ENCODE measurements at regions of chr11 and their contacts with region 1.

Region 1: GRCh38 chr11:124415356-124415923 is 9.2 kb downstream of the OR8B4 start:
- ATAC-seq: no peak
- H3K4me3 ChIP-seq: no peak overlapping the region
- H3K27ac ChIP-seq: no peak overlapping the region
- H3K4me1 ChIP-seq: no peaks in the 10 kb centered on the region

Region 2: DNA sequence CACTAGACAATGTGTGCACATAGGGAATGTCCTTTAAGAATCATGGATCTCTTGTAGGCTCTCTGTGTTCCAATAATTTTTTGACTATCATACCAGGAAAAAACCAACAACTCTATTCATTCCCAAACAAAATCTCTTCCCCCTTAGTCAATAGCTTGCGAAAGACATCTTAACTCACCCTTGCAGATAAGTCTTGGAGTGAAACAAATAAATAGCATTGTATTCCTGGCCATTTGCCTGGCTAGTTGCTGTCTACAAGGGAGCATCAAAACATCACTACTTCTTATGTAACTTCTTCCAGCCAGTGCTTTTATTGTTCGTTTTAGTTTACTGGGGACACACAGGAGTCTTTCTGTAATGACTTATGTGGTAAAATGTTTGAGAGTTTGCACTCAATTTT is 790.5 kb before region 1 on chr11:
- in situ Hi-C with region 1: no loop called
- ATAC-seq: no peak
- H3K4me3 ChIP-seq: no peak overlapping the region
- H3K27ac ChIP-seq: no peak overlapping the region
- H3K4me1 ChIP-seq: no peaks in the 10 kb centered on the region

Region 3: GRCh38 chr11:124301482-124302027 is 113.9 kb before region 1 on chr11:
- in situ Hi-C with region 1: no loop called
- ATAC-seq: peak in 5 of 8 experiments; percentile 68 to 84 (median 70)
- H3K4me3 ChIP-seq: no peak overlapping the region
- H3K27ac ChIP-seq: no peak overlapping the region
- H3K4me1 ChIP-seq: no peaks in the 10 kb centered on the region

Region 4: DNA sequence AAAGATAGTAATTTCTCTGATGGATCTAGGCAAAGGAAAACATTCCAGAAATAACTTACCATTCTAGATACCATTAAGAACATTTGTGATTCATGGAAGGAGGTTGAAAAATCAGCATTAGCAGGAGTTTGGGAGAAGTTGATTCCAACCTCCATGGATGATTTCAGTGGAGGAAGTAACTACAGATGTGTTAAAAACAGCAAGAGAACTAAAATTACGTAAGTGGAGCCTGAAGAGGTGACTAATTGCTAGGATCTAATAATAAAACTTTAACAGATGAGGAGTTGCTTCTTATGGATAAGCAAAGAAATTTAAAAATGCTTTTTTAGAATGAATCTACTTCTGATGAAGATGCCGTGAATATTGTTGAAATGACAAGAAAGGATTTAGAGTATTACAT is 68.9 kb before region 1 on chr11:
- in situ Hi-C with region 1: no loop called
- ATAC-seq: no peak
- H3K4me3 ChIP-seq: no peak overlapping the region
- H3K27ac ChIP-seq: no peak overlapping the region
- H3K4me1 ChIP-seq: no peaks in the 10 kb centered on the region

Region 5: GRCh38 chr11:124577716-124578427 is 162.4 kb after region 1 on chr11:
- in situ Hi-C with region 1: loop called in 6 of 9 experiments (anchors 10 to 25 kb)
- ATAC-seq: no peak
- H3K4me3 ChIP-seq: no peak overlapping the region
- H3K27ac ChIP-seq: no peak overlapping the region
- H3K4me1 ChIP-seq: no peaks in the 10 kb centered on the region

Region 6: DNA sequence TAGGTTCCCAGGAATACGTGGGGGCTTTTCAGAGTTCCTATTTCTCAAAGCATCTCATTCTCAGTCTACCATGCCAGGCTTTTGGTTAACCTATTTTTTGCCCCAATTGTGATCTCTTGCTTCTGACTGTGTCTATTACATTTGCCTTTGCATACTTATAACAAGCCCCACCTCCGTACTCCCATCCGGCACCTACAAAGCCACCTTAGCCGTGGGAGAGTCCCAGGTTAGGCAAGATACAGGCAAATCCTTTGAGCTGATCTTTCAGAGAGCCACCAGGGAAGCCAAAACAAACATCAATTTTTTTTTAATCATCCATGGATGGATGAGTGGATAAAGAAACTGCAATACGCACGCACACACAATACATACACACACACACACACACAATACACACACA is 177.2 kb after region 1 on chr11:
- in situ Hi-C with region 1: loop called in 6 of 9 experiments (anchors 10 to 25 kb)
- ATAC-seq: no peak
- H3K4me3 ChIP-seq: no peak overlapping the region
- H3K27ac ChIP-seq: no peak overlapping the region
- H3K4me1 ChIP-seq: no peaks in the 10 kb centered on the region

Measured in motor neuron (in vitro differentiated cells).